Colonic mucosa (tissue), 4 donors: ENCODE measurements at regions of chr19 and their contacts with region 1.

Region 1: GRCh38 chr19:12139885-12140547 is at the start of gene ZNF20:
- DNase-seq: peak; percentile 99
- H3K4me3 ChIP-seq: peak within 1 kb of the TSS; percentile 77
- H3K27ac ChIP-seq: peak within 1 kb of the TSS; percentile 81
- H3K4me1 ChIP-seq: peaks cover 13% of the 10 kb centered on the region
- H3K27me3 ChIP-seq: no peaks in the 10 kb centered on the region
- CTCF ChIP-seq: no peak
- total RNA-seq, gene ZNF20: 3.4 to 4.8 TPM

Region 2: DNA sequence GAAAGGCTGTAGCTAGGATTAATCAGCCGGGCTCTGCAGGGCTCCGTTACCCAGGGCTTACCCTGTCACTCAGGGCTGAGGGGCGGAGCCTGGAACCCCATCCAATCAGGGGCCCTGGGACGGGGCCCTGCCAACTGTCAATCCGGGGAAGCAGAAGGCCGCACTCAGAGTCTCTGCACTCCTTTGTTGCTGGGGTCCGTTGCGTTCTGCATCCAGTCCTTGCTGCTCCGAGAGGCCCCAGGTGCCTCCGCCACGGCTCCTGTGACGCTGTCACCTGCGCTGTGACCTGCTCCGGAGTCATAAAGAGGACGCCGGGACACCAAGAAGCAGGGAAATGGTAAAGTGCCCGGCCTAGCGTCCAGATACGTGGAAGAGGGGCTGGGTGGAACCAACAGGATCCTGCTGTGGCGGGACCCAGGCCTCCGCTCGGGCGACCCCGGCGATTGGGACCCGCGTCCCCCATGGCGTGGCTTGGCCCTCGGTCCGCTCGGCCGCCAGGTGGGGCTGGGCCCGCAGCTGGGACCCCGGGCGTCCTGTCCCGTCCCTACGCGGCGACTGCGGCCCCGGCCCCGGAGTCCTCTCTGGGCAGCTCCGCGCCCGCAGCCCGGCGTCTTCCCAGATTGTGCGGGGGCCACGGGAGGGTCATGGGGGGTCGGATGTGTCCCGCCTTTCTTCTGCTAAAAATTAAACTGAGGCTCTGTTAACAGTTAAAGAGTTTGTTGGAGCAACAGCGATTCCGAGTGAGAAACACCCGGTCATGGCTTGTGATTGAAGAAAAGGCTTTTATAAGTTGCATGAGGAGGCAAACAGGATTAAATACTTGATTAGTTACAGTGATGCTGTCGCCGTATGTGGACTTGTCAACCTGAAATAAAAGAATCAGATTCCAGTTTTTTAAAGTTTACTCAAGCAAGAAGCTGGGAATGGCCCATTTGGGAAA is 341.4 kb before region 1 on chr19 and contains the start of gene ZNF491:
- intact Hi-C with region 1: loop called (anchors 5 kb)
- DNase-seq: peak; percentile 97
- H3K4me3 ChIP-seq: peak within 1 kb of the TSS; percentile 80
- H3K27ac ChIP-seq: peak within 1 kb of the TSS; percentile 70
- H3K4me1 ChIP-seq: peaks cover 6% of the 10 kb centered on the region
- H3K27me3 ChIP-seq: no peaks in the 10 kb centered on the region
- CTCF ChIP-seq: no peak
- total RNA-seq, gene ZNF491: 1.9 TPM

Region 3: GRCh38 chr19:11881151-11881800 is 258.7 kb before region 1 on chr19:
- intact Hi-C with region 1: loop called (anchors 2 kb)
- DNase-seq: peak; percentile 76
- H3K4me3 ChIP-seq: no peak overlapping the region
- H3K27ac ChIP-seq: no peak overlapping the region
- H3K4me1 ChIP-seq: no peaks in the 10 kb centered on the region
- H3K27me3 ChIP-seq: no peaks in the 10 kb centered on the region
- CTCF ChIP-seq: peak; percentile 62

Region 4: DNA sequence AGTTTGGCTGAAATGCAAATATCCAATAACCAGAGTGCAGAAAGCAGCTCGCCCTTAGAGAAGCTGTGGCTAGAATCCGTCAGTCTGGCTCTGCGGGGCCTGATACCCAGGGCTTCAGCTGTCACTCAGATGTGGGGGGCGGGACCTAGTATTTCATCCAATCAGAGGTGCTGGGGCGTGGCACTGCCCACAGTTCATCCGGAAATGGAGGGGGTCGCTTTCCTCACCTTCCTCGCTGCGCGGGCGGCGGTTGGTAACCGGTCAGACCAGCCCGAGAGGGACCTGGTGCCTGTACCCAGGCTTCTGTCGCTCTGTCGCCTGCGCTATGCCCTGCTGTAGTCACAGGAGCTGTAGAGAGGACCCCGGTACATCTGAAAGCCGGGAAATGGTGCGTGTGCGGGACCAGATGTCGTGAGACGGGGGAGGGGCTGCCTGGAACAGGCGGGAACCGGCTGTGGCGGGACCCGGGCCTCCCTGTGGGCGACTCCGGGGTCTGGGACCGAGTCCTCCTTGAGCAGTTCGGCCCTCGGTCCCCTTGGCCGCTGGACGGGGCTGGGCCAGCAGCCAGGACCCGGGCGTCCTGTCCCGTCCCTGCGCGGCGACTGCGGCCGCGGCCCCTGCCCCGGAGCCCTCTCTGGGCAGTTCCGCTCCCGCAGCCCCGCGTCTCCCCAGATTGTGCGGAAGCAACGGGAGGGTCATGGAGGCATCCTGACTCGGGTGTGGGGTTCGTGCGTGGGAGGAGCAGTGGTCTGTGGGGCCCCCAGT is 214.9 kb before region 1 on chr19 and contains the start of gene ZNF700:
- intact Hi-C with region 1: loop called (anchors 5 kb)
- DNase-seq: peak; percentile 99
- H3K4me3 ChIP-seq: peak within 1 kb of the TSS; percentile 97
- H3K27ac ChIP-seq: peak within 1 kb of the TSS; percentile 99
- H3K4me1 ChIP-seq: no peaks in the 10 kb centered on the region
- H3K27me3 ChIP-seq: no peaks in the 10 kb centered on the region
- CTCF ChIP-seq: no peak
- total RNA-seq, gene ZNF700: 13.4 to 17.1 TPM

Region 5: DNA sequence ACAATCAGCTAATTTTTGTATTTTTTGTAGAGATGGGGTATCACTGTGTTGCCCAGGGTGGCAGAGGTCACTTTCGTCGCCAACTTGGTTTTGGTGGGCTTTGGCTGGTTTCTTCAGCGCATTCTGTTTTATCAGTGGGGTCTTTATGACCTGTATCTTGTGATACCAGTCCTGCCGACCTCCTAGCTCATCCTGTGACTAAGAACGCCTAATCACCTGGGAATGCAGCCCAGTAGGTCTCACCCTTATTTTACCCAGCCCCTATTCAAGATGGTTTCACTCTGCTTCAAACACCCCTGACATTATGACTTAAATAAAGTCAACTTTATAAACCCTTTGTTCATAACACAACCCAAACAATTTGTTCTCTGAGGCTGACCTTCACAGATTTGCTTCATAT is 84.2 kb before region 1 on chr19:
- intact Hi-C with region 1: loop called (anchors 2 kb)
- DNase-seq: no peak
- H3K4me3 ChIP-seq: no peak overlapping the region
- H3K27ac ChIP-seq: no peak overlapping the region
- H3K4me1 ChIP-seq: peaks cover 6% of the 10 kb centered on the region
- H3K27me3 ChIP-seq: no peaks in the 10 kb centered on the region
- CTCF ChIP-seq: no peak